Caco-2 (cell line): ENCODE measurements at regions of chr13 and their contacts with region 1.

Region 1: DNA sequence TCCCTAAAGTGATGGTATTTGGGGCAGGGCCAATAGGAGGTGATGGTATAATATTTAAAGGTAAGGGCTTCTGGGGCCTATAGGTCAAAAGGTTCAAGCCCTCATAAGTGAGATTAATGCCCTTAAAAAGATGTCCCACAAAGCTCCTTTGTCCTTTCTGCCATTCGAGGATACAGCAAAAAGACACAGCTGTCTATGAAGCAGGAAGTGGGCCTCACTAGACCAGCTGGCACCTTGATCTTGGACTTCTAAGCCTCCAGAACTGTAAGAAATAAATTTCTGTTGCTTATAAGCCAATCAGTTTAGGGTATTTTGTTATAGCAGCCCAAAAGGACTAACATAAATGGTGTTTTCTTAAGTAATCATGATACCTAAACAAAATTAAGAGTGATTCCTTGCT is 27.2 kb upstream of the POU4F1 start:
- DNase-seq: no peak
- H3K4me3 ChIP-seq: no peak overlapping the region
- H3K4me3 Mint-ChIP-seq: no peak overlapping the region
- H3K27ac Mint-ChIP-seq: no peak overlapping the region
- H3K4me1 ChIP-seq: 0 out of 2 replicates have a peak, but pooled peaks cover 3% of the 10 kb centered on the region
- H3K4me1 Mint-ChIP-seq: peaks cover 12% of the 10 kb centered on the region
- H3K27me3 ChIP-seq: no peaks in the 10 kb centered on the region
- H3K27me3 Mint-ChIP-seq: no peaks in the 10 kb centered on the region
- CTCF ChIP-seq: no peak

Region 2: GRCh38 chr13:77637588-77637987 is 992.9 kb before region 1 on chr13:
- CTCF ChIA-PET with region 1: no interaction called
- POLR2A ChIA-PET with region 1: no interaction called
- intact Hi-C with region 1: no loop called
- DNase-seq: no peak
- H3K4me3 ChIP-seq: no peak overlapping the region
- H3K4me3 Mint-ChIP-seq: no peak overlapping the region
- H3K27ac Mint-ChIP-seq: no peak overlapping the region
- H3K4me1 ChIP-seq: no peaks in the 10 kb centered on the region
- H3K4me1 Mint-ChIP-seq: no peaks in the 10 kb centered on the region
- H3K27me3 ChIP-seq: no peaks in the 10 kb centered on the region
- H3K27me3 Mint-ChIP-seq: no peaks in the 10 kb centered on the region
- CTCF ChIP-seq: no peak

Region 3: GRCh38 chr13:78609464-78610205 is 20.9 kb before region 1 on chr13:
- CTCF ChIA-PET with region 1: no interaction called
- POLR2A ChIA-PET with region 1: no interaction called
- intact Hi-C with region 1: loop called (anchors 2 kb)
- DNase-seq: peak in 1 of 2 experiments; percentile 35
- H3K4me3 ChIP-seq: peak overlapping the region; percentile 52
- H3K4me3 Mint-ChIP-seq: peak overlapping the region; percentile 72
- H3K27ac Mint-ChIP-seq: no peak overlapping the region
- H3K4me1 ChIP-seq: peaks cover 7% of the 10 kb centered on the region; the same call in 1 of the 2 replicates
- H3K4me1 Mint-ChIP-seq: no peaks in the 10 kb centered on the region
- H3K27me3 ChIP-seq: no peaks in the 10 kb centered on the region
- H3K27me3 Mint-ChIP-seq: peaks cover 3% of the 10 kb centered on the region
- CTCF ChIP-seq: no peak

Region 4: DNA sequence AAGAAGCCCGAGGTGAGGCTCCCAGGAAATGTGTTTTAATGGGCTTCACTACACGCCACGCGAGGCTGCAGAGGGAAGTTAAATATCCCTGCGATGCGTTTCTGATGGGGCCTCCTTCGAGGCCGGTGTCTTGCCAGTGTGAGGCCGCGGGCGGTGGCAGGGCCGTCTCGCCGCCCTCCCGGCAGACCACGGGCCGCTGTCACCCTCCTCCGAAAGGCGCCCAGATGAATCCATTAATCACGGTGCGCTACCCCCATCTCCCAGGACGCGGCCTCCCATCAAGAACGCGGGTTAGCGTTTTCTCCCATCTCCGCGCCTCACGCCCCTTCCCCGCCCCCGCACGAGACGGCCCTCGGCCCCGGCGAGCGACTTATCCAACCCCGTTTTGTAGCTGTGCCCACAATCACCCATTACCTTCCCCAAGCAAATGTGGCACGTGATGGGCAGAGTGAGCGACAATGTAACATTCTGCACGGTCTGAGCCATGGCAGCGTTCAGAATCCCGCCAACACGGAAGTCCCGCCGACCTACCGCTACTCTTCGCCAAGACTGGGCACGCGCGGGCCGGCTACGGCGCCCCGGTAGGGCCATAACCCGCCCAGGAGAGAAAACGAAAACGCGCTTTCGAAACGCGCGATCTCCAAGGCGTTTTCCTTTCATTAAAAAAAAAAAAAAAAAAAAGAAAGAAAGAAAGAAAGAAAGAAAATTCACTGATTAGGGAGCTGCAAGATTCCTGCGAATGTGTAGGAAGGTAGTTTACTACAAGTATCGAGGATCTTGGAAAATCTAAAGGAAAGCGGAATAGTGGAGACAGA is 28.3 kb after region 1 on chr13 and contains the start of gene OBI1:
- CTCF ChIA-PET with region 1: no interaction called
- POLR2A ChIA-PET with region 1: no interaction called
- intact Hi-C with region 1: loop called (anchors 1 kb)
- DNase-seq: peak; percentile 93 to 96
- H3K4me3 ChIP-seq: peak within 1 kb of the TSS; percentile 71
- H3K4me3 Mint-ChIP-seq: peak within 1 kb of the TSS; percentile 95
- H3K27ac Mint-ChIP-seq: peak within 1 kb of the TSS; percentile 94
- H3K4me1 ChIP-seq: peaks cover 8% of the 10 kb centered on the region
- H3K4me1 Mint-ChIP-seq: peaks cover 9% of the 10 kb centered on the region
- H3K27me3 ChIP-seq: no peaks in the 10 kb centered on the region
- H3K27me3 Mint-ChIP-seq: no peaks in the 10 kb centered on the region
- CTCF ChIP-seq: no peak
- total RNA-seq, gene OBI1: 17.9 and 19.9 TPM in 2 replicates